ENCODE measurements at regions of chr5 and their contacts with region 1.

Region 1: GRCh38 chr5:153959134-153959957 is 79.4 kb downstream of the FAM114A2 start:
- DNase-seq: no peak
- ATAC-seq: peak; percentile 63
- H3K4me3 ChIP-seq: no peak overlapping the region
- H3K27ac ChIP-seq: peak overlapping the region in 1 of 2 donors; percentile 60
- H3K4me1 ChIP-seq: peaks cover 0 to 4% of the 10 kb centered on the region in 2 donors
- H3K27me3 ChIP-seq: no peaks in the 10 kb centered on the region

Region 2: DNA sequence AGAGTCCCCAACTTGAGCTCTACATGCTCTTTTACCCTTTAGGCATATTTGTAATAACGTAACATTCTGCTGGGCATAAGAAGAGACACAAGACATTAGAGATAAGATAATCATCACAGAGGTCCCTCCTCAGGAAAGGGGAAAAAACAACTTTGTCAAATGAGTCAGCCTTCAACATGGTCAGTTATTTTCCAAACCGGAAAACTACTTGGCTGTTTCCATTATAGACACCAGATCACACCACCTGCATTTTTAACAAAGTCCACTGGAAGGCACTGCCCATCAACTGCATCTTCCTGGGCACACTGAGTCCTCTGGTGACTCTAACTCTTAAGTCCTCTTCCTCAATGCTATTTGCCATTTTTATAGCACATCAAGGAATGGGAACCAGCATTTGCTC is 142.5 kb before region 1 on chr5:
- intact Hi-C with region 1: loop called in 1 of 2 experiments (anchors 10 kb)
- DNase-seq: no peak
- ATAC-seq: no peak
- H3K4me3 ChIP-seq: no peak overlapping the region
- H3K27ac ChIP-seq: no peak overlapping the region
- H3K4me1 ChIP-seq: no peaks in the 10 kb centered on the region
- H3K27me3 ChIP-seq: no peaks in the 10 kb centered on the region

Region 3: DNA sequence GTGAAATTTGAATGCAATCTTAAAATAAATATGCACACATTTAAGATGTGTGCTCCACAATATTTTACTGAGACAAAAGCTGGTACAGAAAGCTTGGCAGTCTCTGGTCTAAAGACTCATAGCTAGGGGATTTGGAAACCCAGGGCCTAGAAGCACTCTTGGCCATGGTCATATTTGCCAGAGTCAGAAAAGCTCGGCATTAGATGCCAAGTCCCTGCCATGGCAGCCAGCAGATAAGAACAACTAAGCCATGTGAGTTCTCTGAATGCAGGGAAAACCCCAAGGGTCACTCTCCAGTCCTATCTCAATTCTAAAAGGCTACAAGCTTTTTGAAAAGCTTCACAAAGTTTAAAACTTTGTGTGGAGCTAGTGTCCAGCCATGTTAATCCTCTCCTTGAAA is 40.2 kb before region 1 on chr5:
- intact Hi-C with region 1: no loop called
- DNase-seq: peak in 1 of 2 donors; percentile 60
- ATAC-seq: no peak
- H3K4me3 ChIP-seq: no peak overlapping the region
- H3K27ac ChIP-seq: peak overlapping the region in 1 of 2 donors; percentile 8
- H3K4me1 ChIP-seq: no peaks in the 10 kb centered on the region
- H3K27me3 ChIP-seq: no peaks in the 10 kb centered on the region

Region 4: GRCh38 chr5:154405078-154405792 is 445.9 kb after region 1 on chr5:
- intact Hi-C with region 1: no loop called
- DNase-seq: peak; percentile 88 to 94
- ATAC-seq: peak; percentile 95
- H3K4me3 ChIP-seq: peak overlapping the region in 1 of 2 donors; percentile 8
- H3K27ac ChIP-seq: no peak overlapping the region
- H3K4me1 ChIP-seq: no peaks in the 10 kb centered on the region
- H3K27me3 ChIP-seq: no peaks in the 10 kb centered on the region

Measured in aorta (tissue), 5 donors.